ENCODE measurements at regions of chr12 and their contacts with region 1.

Region 1: DNA sequence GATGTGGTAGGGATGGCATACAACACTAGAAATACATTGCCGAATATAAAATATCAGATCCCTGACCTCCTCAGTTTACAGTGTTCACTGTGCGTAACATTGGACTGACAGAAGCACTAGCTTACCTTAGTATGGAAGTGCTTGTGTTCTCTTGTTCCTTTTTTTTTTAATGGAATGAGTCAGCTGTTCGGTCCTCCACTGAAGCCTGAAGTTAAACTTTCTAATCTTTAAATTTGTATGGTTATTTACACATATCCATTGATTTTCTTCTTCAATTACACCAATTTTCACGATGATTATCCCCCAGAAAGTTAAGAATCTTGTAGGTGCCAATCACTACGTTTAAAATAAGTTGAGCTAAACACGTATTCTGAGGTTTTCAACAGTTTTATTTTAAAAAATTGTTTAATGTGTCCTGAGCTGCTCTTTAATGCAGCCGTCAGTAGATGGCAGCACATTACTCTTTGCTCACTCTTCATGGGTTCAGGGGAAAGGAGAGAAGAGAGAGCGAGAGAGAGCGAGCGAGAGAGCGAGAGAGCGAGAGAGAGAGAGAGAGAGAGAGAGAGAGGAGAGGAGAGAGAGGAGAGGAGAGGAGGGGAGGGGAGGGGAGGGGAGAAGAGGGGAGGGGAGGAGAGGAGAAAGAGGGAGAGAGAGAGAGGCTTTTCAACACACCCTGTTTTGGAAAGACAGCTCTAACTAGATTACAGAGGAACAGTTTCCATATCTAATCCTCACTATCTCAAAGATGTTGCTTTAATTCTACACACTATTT is 134.7 kb upstream of the SCAF11 start:
- DNase-seq: peak; percentile 80
- ATAC-seq: peak; percentile 97
- H3K4me3 ChIP-seq: peak overlapping the region; percentile 18 to 55
- H3K27ac ChIP-seq: no peak overlapping the region
- H3K4me1 ChIP-seq: peaks cover 0 to 10% of the 10 kb centered on the region in 2 experiments; a peak in 1 of 4 replicates
- H3K27me3 ChIP-seq: no peaks in the 10 kb centered on the region
- CTCF ChIP-seq: peak; percentile 68 to 87 (median 76); a peak in 5 of 6 replicates
- POLR2A ChIP-seq: no peak
- RAD21 ChIP-seq: peak; percentile 77

Region 2: DNA sequence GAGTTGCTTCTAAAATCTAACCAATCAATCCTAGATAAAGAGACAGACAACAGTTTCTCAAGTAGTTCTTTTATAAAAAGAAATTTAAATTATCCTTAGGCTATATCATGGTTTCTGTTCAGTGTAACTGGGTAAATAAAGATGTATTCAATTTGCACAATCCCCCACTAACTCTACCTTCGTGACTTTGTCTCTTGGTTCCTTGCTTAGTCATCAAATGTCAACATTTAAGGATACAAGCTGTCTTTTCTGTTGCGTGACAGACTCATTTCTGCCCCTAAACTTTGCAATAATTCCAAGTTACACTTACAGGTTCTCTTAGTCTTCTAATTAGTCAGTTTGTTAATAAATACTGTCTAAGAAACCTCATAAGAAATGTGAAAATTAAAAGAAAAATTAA is 185.3 kb before region 1 on chr12:
- CTCF ChIA-PET with region 1: no interaction called
- POLR2A ChIA-PET with region 1: no interaction called
- RAD21 ChIA-PET with region 1: no interaction called
- intact Hi-C with region 1: no loop called
- DNase-seq: no peak
- ATAC-seq: no peak
- H3K4me3 ChIP-seq: no peak overlapping the region
- H3K27ac ChIP-seq: no peak overlapping the region
- H3K4me1 ChIP-seq: no peaks in the 10 kb centered on the region
- H3K27me3 ChIP-seq: no peaks in the 10 kb centered on the region
- CTCF ChIP-seq: no peak
- POLR2A ChIP-seq: no peak
- RAD21 ChIP-seq: no peak

Region 3: DNA sequence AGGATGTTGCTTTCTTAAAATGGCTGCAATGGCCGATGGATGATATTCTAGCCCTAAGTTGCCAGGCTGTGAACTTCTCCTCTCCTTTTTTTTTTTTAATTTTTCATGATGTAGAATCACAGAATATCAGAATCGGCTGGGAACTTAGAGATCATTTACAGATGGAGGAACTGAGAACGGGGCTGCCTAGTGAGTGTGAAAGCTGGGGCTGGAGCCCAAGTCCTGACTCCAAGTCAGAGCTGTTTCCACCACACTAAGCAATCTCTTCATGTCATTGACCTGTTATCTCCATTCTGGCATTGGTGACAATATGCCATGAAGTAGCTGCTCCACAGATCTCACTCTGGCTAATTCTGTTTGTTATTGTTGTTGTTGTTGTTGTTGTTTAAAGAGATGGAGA is 22.1 kb after region 1 on chr12:
- CTCF ChIA-PET with region 1: interaction called, 12 read pairs
- POLR2A ChIA-PET with region 1: interaction called, 3 read pairs
- RAD21 ChIA-PET with region 1: no interaction called
- intact Hi-C with region 1: no loop called
- DNase-seq: no peak
- ATAC-seq: no peak
- H3K4me3 ChIP-seq: no peak overlapping the region
- H3K27ac ChIP-seq: no peak overlapping the region
- H3K4me1 ChIP-seq: no peaks in the 10 kb centered on the region
- H3K27me3 ChIP-seq: no peaks in the 10 kb centered on the region
- CTCF ChIP-seq: no peak
- POLR2A ChIP-seq: no peak
- RAD21 ChIP-seq: no peak

Region 4: DNA sequence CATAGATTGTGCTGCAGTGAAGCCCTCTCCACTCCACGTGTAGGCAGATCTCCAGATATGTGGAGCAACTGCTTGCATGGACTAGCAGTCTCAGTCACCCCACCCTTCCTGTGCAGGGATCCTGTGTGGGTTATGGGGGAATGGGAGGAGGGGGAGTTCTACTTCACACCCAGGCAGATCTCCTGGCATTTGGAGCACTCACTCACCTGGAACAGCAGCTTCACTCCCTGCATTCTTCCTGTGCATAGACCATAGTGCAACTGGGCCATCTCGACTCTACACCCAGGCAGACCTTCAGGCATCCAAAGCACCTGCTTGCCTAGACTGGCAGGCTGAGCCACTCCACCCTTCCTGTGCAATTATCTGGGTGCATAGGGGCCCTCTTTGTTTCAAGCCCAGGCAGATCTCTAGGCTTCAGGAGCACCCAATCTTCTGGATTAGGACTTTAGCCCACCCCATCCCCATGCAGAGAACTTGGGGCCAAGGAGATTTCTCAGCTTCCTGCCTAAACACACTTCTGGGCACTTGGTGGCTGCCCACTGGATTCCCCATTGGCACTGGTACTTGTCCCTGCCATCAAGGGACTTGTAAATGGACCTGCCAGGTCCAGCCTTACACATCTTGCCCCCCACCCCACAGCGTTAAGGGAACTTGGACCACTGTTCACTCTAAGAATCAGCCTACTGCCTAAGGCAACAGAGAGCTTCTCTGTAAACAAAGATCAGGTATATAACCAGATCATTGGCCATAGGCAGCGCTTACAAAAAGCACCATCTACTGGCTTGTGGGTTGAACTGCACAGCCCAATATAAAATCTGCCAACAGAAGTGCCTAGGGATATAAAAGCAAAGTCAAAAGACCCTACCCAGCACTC is 858.6 kb after region 1 on chr12:
- CTCF ChIA-PET with region 1: interaction called, 5 read pairs
- POLR2A ChIA-PET with region 1: no interaction called
- RAD21 ChIA-PET with region 1: no interaction called
- intact Hi-C with region 1: loop called (anchors 1 kb)
- DNase-seq: peak; percentile 56
- ATAC-seq: peak; percentile 97
- H3K4me3 ChIP-seq: no peak overlapping the region
- H3K27ac ChIP-seq: no peak overlapping the region
- H3K4me1 ChIP-seq: no peaks in the 10 kb centered on the region
- H3K27me3 ChIP-seq: no peaks in the 10 kb centered on the region
- CTCF ChIP-seq: peak; percentile 78 to 88 (median 84)
- POLR2A ChIP-seq: no peak
- RAD21 ChIP-seq: peak; percentile 89